B cell (primary cell): ENCODE measurements at regions of chr14 and their contacts with region 1.

Region 1: GRCh38 chr14:104665657-104666522 is 23.5 kb upstream of the INF2 start:
- DNase-seq: peak; percentile 72
- ATAC-seq: peak; percentile 50
- H3K4me3 ChIP-seq: peak overlapping the region in 2 of 5 experiments; percentile 5 to 15
- H3K4me3 Mint-ChIP-seq: peak overlapping the region; percentile 73
- H3K27ac ChIP-seq: peak overlapping the region; percentile 52 to 65
- H3K27ac Mint-ChIP-seq: peak overlapping the region; percentile 89
- H3K4me1 ChIP-seq: peaks cover 40 to 49% of the 10 kb centered on the region in 2 donors
- H3K4me1 Mint-ChIP-seq: peaks cover 45% of the 10 kb centered on the region
- H3K27me3 ChIP-seq: no peaks in the 10 kb centered on the region
- H3K27me3 Mint-ChIP-seq: no peaks in the 10 kb centered on the region
- CTCF ChIP-seq: peak; percentile 57

Region 2: GRCh38 chr14:104650057-104650981 is 15.6 kb before region 1 on chr14:
- CTCF ChIA-PET with region 1: interaction called, 19 read pairs
- POLR2A ChIA-PET with region 1: no interaction called
- intact Hi-C with region 1: loop called (anchors 2 kb)
- DNase-seq: peak; percentile 87
- ATAC-seq: peak; percentile 97
- H3K4me3 ChIP-seq: peak overlapping the region in 4 of 5 experiments; percentile 59 to 68 (median 62)
- H3K4me3 Mint-ChIP-seq: peak overlapping the region; percentile 83
- H3K27ac ChIP-seq: peak overlapping the region; percentile 59 to 70
- H3K27ac Mint-ChIP-seq: peak overlapping the region; percentile 74
- H3K4me1 ChIP-seq: peaks cover 35 to 47% of the 10 kb centered on the region in 2 donors
- H3K4me1 Mint-ChIP-seq: peaks cover 51% of the 10 kb centered on the region
- H3K27me3 ChIP-seq: no peaks in the 10 kb centered on the region
- H3K27me3 Mint-ChIP-seq: no peaks in the 10 kb centered on the region
- CTCF ChIP-seq: peak; percentile 99